ENCODE measurements at regions of chr2 and their contacts with region 1.

Region 1: DNA sequence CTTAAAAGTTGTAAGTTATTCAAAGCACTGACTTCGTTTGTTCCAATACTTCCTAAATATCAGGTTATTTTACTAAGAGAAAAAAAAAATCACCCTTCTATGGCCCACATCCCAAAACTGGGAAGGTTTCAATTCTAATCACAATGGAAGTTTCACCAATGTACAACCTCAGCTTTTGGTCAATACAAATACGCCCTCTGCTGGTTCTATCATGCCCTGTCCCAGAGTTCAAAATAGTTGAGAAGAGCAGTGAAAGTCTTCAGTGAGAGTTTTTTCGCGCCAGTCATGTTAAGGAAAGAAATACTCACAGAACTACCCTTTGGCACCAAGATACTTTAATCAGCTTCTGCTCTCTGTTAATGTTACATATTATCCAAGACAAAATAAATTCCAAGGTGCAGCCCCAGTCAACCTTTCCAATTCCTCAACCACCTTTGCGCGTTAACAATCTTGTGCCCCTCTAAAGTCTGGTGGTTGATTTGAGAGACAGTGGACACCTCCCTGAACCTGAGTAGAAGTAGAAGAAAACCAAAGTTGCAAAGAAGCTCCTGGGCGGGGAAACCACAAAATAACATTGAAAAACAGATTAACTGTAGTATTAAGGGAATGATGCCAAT is 59.9 kb downstream of the SUMO1 start:
- DNase-seq: peak; percentile 58
- ATAC-seq: peak; percentile 94
- H3K4me3 ChIP-seq: no peak overlapping the region
- H3K27ac ChIP-seq: no peak overlapping the region
- H3K4me1 ChIP-seq: no peaks in the 10 kb centered on the region
- H3K27me3 ChIP-seq: no peaks in the 10 kb centered on the region
- CTCF ChIP-seq: peak; percentile 88
- EP300 ChIP-seq: no peak
- POLR2A ChIP-seq: no peak
- RAD21 ChIP-seq: peak; percentile 71

Region 2: GRCh38 chr2:201680743-201681142 is 497.7 kb before region 1 on chr2:
- CTCF ChIA-PET with region 1: interaction called, 3 read pairs
- POLR2A ChIA-PET with region 1: no interaction called
- in situ Hi-C with region 1: no loop called
- intact Hi-C with region 1: loop called (anchors 1 kb)
- DNase-seq: peak; percentile 49
- ATAC-seq: peak; percentile 96
- H3K4me3 ChIP-seq: no peak overlapping the region
- H3K27ac ChIP-seq: no peak overlapping the region
- H3K4me1 ChIP-seq: no peaks in the 10 kb centered on the region
- H3K27me3 ChIP-seq: peaks cover 0 to 19% of the 10 kb centered on the region in 2 experiments; a peak in 1 of 5 replicates
- CTCF ChIP-seq: peak; percentile 82
- EP300 ChIP-seq: no peak
- POLR2A ChIP-seq: no peak
- RAD21 ChIP-seq: 0 out of 2 replicates have a peak, but pooled peaks have one; percentile 19

Region 3: GRCh38 chr2:201795607-201796477 is 382.6 kb before region 1 on chr2:
- CTCF ChIA-PET with region 1: interaction called, 17 read pairs
- POLR2A ChIA-PET with region 1: no interaction called
- in situ Hi-C with region 1: loop called (anchors 10 kb)
- intact Hi-C with region 1: loop called (anchors 1 kb)
- DNase-seq: peak; percentile 26
- ATAC-seq: peak; percentile 89
- H3K4me3 ChIP-seq: no peak overlapping the region
- H3K27ac ChIP-seq: no peak overlapping the region
- H3K4me1 ChIP-seq: no peaks in the 10 kb centered on the region
- H3K27me3 ChIP-seq: no peaks in the 10 kb centered on the region
- CTCF ChIP-seq: peak; percentile 81
- EP300 ChIP-seq: no peak
- POLR2A ChIP-seq: no peak
- RAD21 ChIP-seq: no peak

Region 4: GRCh38 chr2:201860636-201861066 is 317.8 kb before region 1 on chr2:
- CTCF ChIA-PET with region 1: interaction called, 44 read pairs
- POLR2A ChIA-PET with region 1: no interaction called
- in situ Hi-C with region 1: loop called (anchors 5 kb)
- intact Hi-C with region 1: loop called (anchors 1 kb)
- DNase-seq: peak; percentile 69
- ATAC-seq: peak; percentile 98
- H3K4me3 ChIP-seq: no peak overlapping the region
- H3K27ac ChIP-seq: no peak overlapping the region
- H3K4me1 ChIP-seq: no peaks in the 10 kb centered on the region
- H3K27me3 ChIP-seq: peaks cover 3 to 11% of the 10 kb centered on the region in 2 experiments; a peak in 3 of 5 replicates
- CTCF ChIP-seq: peak; percentile 95
- EP300 ChIP-seq: no peak
- POLR2A ChIP-seq: no peak
- RAD21 ChIP-seq: peak; percentile 88

Region 5: DNA sequence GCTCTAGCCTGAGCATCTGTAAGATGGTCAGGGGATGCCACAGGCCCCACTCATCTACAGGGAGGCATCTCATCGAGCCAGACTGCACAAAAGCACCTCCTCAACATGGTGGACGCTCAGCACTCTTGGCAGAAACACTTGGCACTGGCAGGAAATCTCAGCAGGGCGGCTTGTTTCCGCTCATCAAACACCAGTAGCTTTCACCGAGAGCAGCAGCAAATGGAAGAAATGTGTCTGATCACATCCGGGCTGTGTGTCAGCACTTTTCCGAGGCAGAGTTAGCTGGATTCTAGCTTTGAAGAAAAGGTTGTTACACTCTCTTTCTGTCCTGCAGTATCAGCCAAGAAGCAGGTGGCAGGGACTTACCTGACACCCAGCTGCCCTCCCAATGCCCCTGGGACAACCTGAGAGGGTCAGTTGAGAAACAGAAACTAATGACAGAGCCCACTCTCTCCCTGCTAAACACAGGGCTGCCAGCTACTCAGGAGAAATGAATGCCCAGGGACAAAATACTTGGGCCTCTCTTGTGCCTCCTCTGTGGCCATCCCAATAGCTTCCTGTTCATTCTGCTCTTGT is 213.7 kb before region 1 on chr2:
- CTCF ChIA-PET with region 1: no interaction called
- POLR2A ChIA-PET with region 1: no interaction called
- in situ Hi-C with region 1: no loop called
- intact Hi-C with region 1: loop called (anchors 1 kb)
- DNase-seq: no peak
- ATAC-seq: no peak
- H3K4me3 ChIP-seq: no peak overlapping the region
- H3K27ac ChIP-seq: no peak overlapping the region
- H3K4me1 ChIP-seq: no peaks in the 10 kb centered on the region
- H3K27me3 ChIP-seq: peaks cover 0 to 25% of the 10 kb centered on the region in 2 experiments; a peak in 3 of 5 replicates
- CTCF ChIP-seq: no peak
- EP300 ChIP-seq: no peak
- POLR2A ChIP-seq: no peak
- RAD21 ChIP-seq: no peak

Region 6: GRCh38 chr2:202104278-202104870 is 74.1 kb before region 1 on chr2:
- CTCF ChIA-PET with region 1: interaction called, 27 read pairs
- POLR2A ChIA-PET with region 1: no interaction called
- in situ Hi-C with region 1: loop called (anchors 5 kb)
- intact Hi-C with region 1: loop called (anchors 1 kb)
- DNase-seq: peak; percentile 36
- ATAC-seq: peak; percentile 95
- H3K4me3 ChIP-seq: no peak overlapping the region
- H3K27ac ChIP-seq: no peak overlapping the region
- H3K4me1 ChIP-seq: no peaks in the 10 kb centered on the region
- H3K27me3 ChIP-seq: peaks cover 0 to 8% of the 10 kb centered on the region in 2 experiments; a peak in 1 of 5 replicates
- CTCF ChIP-seq: peak; percentile 87
- EP300 ChIP-seq: no peak
- POLR2A ChIP-seq: no peak
- RAD21 ChIP-seq: peak; percentile 65